ENCODE measurements at regions of chr11 and their contacts with region 1.

Region 1: GRCh38 chr11:72683782-72684200 is 9.6 kb upstream of the PDE2A start:
- DNase-seq: peak; percentile 39 to 66 (median 55)
- H3K4me3 ChIP-seq: no peak overlapping the region
- H3K27ac ChIP-seq: no peak overlapping the region
- H3K4me1 ChIP-seq: no peaks in the 10 kb centered on the region
- H3K27me3 ChIP-seq: peaks cover 0 to 16% (median 5%) of the 10 kb centered on the region in 5 experiments

Region 2: DNA sequence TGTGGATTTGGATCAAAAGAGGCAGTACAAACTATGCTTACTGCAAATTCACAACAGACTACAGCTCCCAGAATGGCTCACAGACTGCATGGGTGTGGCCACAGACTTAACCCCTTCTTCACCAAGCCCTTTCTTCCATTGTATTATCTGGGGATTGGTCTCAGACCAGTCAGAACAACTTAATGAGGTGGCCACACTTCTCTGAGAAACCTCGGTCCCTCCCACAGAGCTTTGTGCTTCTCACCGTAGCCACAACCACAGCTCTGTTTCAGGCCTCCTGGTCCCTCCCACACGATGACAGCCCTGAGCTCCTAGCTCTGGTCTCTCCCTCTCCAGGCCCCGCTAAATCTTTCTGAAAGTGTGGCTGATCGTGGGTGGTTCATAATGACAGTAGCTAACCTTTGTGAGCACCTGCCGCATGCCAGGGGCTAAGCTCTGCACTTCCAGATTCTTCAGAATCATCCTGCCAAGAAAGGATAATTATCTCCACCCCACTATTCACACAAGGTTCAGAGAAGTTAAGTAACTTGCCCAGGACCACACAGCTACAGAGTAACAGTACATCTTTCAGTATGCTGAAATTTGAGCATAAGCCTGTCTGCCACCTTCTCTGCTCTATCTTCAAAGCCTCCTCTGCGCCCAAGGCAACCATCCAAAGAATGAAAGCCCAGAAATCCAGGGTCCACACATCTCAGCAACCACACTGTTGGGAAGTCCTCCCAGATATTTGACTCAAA is 15.0 kb before region 1 on chr11:
- CTCF ChIA-PET with region 1: interaction called, 17 read pairs
- POLR2A ChIA-PET with region 1: no interaction called
- DNase-seq: peak; percentile 11 to 39 (median 36)
- H3K4me3 ChIP-seq: no peak overlapping the region
- H3K27ac ChIP-seq: no peak overlapping the region
- H3K4me1 ChIP-seq: no peaks in the 10 kb centered on the region
- H3K27me3 ChIP-seq: peaks cover 0 to 56% (median 30%) of the 10 kb centered on the region in 5 experiments

Region 3: DNA sequence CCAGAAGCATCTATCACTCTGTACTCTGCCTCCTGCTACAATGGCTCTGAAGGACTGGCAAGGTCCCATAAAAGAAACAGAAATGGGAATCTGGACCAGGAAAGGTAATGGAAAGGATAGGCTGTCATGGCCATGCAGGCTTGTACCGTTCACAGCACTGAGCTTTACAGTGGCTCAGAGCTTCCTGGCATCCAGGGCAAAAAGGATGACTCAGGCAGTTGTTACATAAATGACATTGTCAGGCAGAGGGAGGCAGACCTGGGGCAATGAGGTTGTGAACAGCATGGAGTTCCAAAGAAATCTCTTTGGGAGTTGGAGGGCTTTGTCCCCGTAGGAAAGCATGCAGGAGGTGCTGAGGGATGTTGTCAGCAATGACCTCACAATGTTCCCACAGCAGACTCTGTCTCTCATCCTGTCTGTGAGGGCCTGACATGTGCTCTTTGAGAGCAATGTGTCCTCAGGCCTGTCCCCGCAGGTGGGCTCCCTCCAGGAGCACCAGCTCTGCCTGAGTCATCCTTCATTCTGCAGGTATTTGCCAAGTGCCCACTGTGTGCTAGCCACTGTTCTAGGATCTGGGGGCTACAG is 16.3 kb after region 1 on chr11:
- CTCF ChIA-PET with region 1: interaction called, 19 read pairs
- POLR2A ChIA-PET with region 1: no interaction called
- DNase-seq: no peak
- H3K4me3 ChIP-seq: no peak overlapping the region
- H3K27ac ChIP-seq: no peak overlapping the region
- H3K4me1 ChIP-seq: no peaks in the 10 kb centered on the region
- H3K27me3 ChIP-seq: no peaks in the 10 kb centered on the region

Region 4: GRCh38 chr11:72908032-72908676 is 224.4 kb after region 1 on chr11:
- CTCF ChIA-PET with region 1: no interaction called
- POLR2A ChIA-PET with region 1: no interaction called
- DNase-seq: no peak
- H3K4me3 ChIP-seq: no peak overlapping the region
- H3K27ac ChIP-seq: no peak overlapping the region
- H3K4me1 ChIP-seq: no peaks in the 10 kb centered on the region
- H3K27me3 ChIP-seq: no peaks in the 10 kb centered on the region

Region 5: DNA sequence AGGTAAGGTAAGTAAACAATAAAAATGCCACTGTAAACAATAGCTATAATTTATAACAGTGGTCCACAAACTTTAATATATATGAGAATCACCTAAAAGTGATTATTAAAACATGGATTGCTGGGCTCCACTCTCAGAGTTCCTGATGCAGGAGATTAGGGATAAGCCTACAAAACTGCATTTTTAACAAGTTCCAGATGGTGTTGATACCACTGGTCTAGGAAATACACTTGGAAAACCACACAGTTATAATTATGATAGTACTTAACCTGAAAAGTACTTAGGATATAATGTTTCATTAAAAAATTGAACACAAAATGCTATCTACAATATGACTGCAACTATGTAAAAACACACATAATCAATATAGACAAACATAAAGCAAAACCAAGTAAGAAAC is 437.9 kb after region 1 on chr11:
- CTCF ChIA-PET with region 1: no interaction called
- POLR2A ChIA-PET with region 1: no interaction called
- DNase-seq: no peak
- H3K4me3 ChIP-seq: no peak overlapping the region
- H3K27ac ChIP-seq: no peak overlapping the region
- H3K4me1 ChIP-seq: no peaks in the 10 kb centered on the region
- H3K27me3 ChIP-seq: no peaks in the 10 kb centered on the region